WTC11 (cell line): ENCODE measurements at regions of chr16 and their contacts with region 1.

Region 1: DNA sequence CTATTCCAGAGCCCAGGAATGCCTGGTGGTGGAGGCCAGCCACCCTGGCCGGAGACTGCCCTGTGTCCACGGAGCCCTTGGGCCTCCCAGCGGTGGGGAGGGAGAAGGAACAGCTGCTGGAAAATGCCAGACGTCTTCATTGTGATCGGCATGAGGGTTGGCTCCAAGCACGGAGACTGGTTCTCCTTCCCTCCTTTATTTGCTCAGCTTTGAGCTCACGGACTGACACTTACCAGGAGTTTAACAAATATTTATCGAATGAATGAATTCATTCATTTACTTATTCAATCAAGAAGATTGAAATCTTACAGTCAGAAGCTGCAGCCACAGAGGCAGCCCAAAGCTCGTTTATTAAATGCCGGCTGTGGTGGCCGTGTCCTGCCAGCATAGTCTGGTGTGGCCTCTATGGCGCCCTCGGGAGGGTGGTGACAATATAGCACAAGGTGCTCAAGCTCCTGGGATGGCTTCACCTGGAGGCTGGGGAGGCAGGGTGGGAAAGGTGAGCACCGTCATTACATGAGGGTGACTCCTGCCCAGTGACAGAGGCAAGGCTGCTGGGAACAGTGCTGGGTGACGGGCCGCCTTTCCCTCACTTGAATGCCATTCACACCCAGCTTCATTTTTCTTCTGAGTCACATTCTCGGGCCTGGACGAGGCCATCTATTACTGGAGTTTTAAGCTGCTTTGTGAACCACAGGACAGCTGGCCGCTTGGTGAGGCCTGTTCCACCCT is 31.0 kb upstream of the JPH3 start:
- DNase-seq: peak; percentile 85
- ATAC-seq: peak; percentile 77
- H3K4me3 Mint-ChIP-seq: no peak overlapping the region
- H3K27ac Mint-ChIP-seq: no peak overlapping the region
- H3K4me1 Mint-ChIP-seq: peaks cover 28% of the 10 kb centered on the region
- H3K27me3 Mint-ChIP-seq: no peaks in the 10 kb centered on the region; the same call in 1 of the 2 replicates
- CTCF ChIP-seq: no peak

Region 2: DNA sequence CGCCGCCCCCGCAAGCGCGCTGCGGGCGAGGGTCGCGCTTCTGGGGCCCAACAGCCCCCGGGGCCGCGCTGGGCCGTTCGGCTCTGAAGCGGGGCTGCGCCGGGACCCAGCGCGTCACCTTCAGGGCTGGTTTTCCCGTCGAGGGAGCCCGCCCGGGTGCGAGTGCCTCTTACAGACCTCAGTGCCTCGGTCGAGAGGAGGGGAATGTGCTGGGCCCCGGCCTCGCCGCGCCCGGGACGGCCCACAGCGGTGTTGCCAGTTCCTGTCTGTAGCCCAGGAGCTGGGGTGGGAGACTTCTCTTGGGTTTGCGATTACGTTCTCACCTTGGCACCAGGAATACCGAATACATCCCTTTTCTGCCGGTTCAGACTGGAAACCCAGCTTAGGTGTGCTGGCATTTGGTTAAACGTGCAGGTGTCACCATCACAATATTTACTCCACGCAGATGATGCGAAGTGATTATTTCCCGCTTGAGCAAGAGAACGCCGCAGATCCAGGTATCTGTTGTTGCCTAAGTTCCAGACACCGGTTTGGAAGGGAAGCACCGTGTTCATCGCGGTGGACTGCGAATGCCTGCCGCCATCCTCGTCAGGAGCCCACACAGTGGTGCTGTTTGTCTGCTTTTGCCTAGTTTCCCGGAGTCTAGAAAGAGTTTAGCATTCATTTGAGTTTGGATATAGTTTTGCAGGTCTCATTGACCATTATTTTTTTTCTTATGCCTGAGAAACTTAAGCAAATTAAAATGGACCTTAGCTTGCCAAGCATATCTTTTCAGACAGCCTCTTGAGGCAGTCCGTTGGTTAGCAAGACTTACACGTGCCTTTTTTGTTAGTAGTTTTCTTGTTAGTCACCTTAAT is 178.3 kb before region 1 on chr16:
- CTCF ChIA-PET with region 1: interaction called, 20 read pairs
- POLR2A ChIA-PET with region 1: no interaction called
- DNase-seq: peak; percentile 66
- ATAC-seq: peak; percentile 5
- H3K4me3 Mint-ChIP-seq: peak overlapping the region; percentile 87
- H3K27ac Mint-ChIP-seq: peak overlapping the region; percentile 91
- H3K4me1 Mint-ChIP-seq: peaks cover 31% of the 10 kb centered on the region
- H3K27me3 Mint-ChIP-seq: peaks cover 3% of the 10 kb centered on the region; the same call in 1 of the 2 replicates
- CTCF ChIP-seq: no peak

Region 3: GRCh38 chr16:87461466-87461991 is 109.8 kb before region 1 on chr16:
- CTCF ChIA-PET with region 1: interaction called, 26 read pairs
- POLR2A ChIA-PET with region 1: interaction called, 3 read pairs
- DNase-seq: peak; percentile 94
- ATAC-seq: peak; percentile 99
- H3K4me3 Mint-ChIP-seq: peak overlapping the region; percentile 54
- H3K27ac Mint-ChIP-seq: peak overlapping the region; percentile 80
- H3K4me1 Mint-ChIP-seq: peaks cover 30% of the 10 kb centered on the region
- H3K27me3 Mint-ChIP-seq: no peaks in the 10 kb centered on the region
- CTCF ChIP-seq: no peak

Region 4: GRCh38 chr16:87550496-87550961 is 20.8 kb before region 1 on chr16:
- CTCF ChIA-PET with region 1: interaction called, 29 read pairs
- POLR2A ChIA-PET with region 1: no interaction called
- DNase-seq: peak; percentile 79
- ATAC-seq: peak; percentile 71
- H3K4me3 Mint-ChIP-seq: no peak overlapping the region
- H3K27ac Mint-ChIP-seq: no peak overlapping the region
- H3K4me1 Mint-ChIP-seq: no peaks in the 10 kb centered on the region
- H3K27me3 Mint-ChIP-seq: peaks cover 2% of the 10 kb centered on the region
- CTCF ChIP-seq: peak; percentile 98

Region 5: DNA sequence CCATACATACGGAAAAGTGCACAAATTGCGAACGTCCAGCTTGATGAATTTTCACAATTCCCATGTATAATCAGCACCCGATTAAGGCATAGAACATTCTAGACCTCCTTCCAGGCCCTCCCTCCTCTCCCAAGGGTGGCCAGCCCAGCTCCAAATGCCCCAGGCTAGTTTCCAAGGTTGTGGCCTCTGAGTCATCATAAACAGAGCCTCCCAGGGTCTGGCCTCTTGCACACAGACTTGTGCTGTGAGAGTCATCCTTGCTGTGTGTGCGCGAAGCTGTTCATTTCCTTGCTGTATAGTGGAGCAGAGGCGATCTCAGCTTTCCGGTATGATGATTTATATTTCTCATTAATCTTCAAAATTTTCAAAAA is 10.5 kb after region 1 on chr16:
- CTCF ChIA-PET with region 1: interaction called, 52 read pairs
- POLR2A ChIA-PET with region 1: no interaction called
- DNase-seq: no peak
- ATAC-seq: no peak
- H3K4me3 Mint-ChIP-seq: no peak overlapping the region
- H3K27ac Mint-ChIP-seq: 0 out of 2 replicates have a peak overlapping the region, but pooled peaks have one; percentile 9
- H3K4me1 Mint-ChIP-seq: peaks cover 22% of the 10 kb centered on the region
- H3K27me3 Mint-ChIP-seq: no peaks in the 10 kb centered on the region
- CTCF ChIP-seq: no peak

Region 6: GRCh38 chr16:87702325-87702811 is 131.1 kb after region 1 on chr16:
- CTCF ChIA-PET with region 1: interaction called, 13 read pairs
- POLR2A ChIA-PET with region 1: no interaction called
- DNase-seq: peak; percentile 74
- ATAC-seq: peak; percentile 74
- H3K4me3 Mint-ChIP-seq: no peak overlapping the region
- H3K27ac Mint-ChIP-seq: peak overlapping the region; percentile 53; the same call in 1 of the 2 replicates
- H3K4me1 Mint-ChIP-seq: peaks cover 8% of the 10 kb centered on the region
- H3K27me3 Mint-ChIP-seq: no peaks in the 10 kb centered on the region
- CTCF ChIP-seq: peak; percentile 39; the same call in 1 of the 2 replicates